Caco-2 (cell line): ENCODE measurements at regions of chr2 and their contacts with region 1.

Region 1: GRCh38 chr2:191582355-191582754 is 95.6 kb upstream of the NABP1 start:
- DNase-seq: peak; percentile 79 to 80
- H3K4me3 ChIP-seq: no peak overlapping the region
- H3K4me3 Mint-ChIP-seq: peak overlapping the region; percentile 46
- H3K27ac Mint-ChIP-seq: peak overlapping the region; percentile 97
- H3K4me1 ChIP-seq: peaks cover 45% of the 10 kb centered on the region
- H3K4me1 Mint-ChIP-seq: peaks cover 13% of the 10 kb centered on the region
- H3K27me3 ChIP-seq: no peaks in the 10 kb centered on the region
- H3K27me3 Mint-ChIP-seq: no peaks in the 10 kb centered on the region
- CTCF ChIP-seq: no peak

Region 2: DNA sequence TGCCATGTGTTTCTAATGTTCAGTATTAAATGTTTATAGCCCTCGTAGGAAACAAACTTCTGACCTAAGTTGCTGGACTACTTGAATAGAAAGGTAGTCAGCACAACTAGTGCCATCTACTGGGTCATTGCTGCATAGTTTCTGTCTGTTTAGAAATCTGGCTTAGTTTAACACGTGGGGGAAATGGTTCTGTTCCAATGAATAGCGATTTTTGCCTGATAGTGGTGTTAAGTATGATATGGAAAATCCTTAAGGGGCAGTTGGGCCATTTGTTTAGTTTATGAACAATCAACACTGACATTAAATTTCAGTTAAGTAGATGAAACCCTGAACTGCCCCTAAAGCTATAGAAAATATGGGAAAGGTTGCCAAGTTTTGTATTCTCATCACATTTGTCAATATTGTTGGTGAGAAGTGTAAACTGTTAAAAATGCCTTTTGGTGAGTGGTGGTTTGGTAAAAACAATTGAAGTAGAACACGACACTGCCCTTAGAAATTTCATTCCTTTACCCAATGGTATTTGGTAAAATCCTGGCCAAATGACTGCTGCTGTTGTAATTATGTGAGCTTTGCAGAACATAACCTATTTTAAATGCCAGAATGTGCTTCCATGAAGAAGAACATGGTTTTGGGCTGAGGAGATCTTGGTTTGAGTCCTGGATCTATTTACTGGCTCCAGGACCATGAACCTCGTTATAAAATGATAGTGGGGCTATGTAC is 108.8 kb after region 1 on chr2:
- CTCF ChIA-PET with region 1: no interaction called
- POLR2A ChIA-PET with region 1: no interaction called
- intact Hi-C with region 1: loop called (anchors 1 kb)
- DNase-seq: peak; percentile 56 to 70
- H3K4me3 ChIP-seq: no peak overlapping the region
- H3K4me3 Mint-ChIP-seq: peak overlapping the region; percentile 52
- H3K27ac Mint-ChIP-seq: peak overlapping the region; percentile 53
- H3K4me1 ChIP-seq: peaks cover 62% of the 10 kb centered on the region
- H3K4me1 Mint-ChIP-seq: peaks cover 44% of the 10 kb centered on the region
- H3K27me3 ChIP-seq: no peaks in the 10 kb centered on the region
- H3K27me3 Mint-ChIP-seq: no peaks in the 10 kb centered on the region
- CTCF ChIP-seq: peak; percentile 72 to 82